Gastrocnemius medialis (tissue), 4 donors: ENCODE measurements at regions of chr17 and their contacts with region 1.

Region 1: DNA sequence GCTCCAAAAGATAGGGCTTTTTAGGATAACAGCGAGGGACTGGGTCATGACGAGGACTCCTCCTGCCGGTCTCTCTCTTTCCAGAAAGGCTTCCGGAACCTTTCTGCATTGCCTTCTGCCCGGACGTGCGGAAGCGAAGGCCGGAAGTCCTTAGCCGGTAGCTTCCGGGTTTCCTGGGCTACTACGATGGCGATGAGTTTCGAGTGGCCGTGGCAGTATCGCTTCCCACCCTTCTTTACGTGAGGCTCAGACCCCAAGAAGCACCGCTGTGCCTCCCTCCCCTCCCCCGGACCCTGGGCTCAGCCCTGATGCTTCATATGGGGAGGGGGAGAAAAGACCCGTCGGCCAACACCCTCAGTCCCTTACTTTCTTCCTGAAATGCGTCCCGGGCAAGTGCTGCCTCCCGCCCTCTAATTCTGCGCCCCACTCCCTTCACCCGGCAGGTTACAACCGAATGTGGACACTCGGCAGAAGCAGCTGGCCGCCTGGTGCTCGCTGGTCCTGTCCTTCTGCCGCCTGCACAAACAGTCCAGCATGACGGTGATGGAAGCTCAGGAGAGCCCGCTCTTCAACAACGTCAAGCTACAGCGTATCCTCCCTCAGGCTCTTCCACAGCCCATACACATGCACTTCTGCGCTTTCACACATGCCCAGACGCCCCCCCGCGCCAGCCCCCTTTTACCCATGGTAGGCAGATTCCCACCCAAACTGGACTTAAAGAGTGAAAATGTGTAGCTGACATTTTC is at the start of gene VPS25:
- DNase-seq: peak; percentile 62 to 74
- ATAC-seq: peak; percentile 96 to 99
- H3K4me3 ChIP-seq: peak within 1 kb of the TSS; percentile 85 to 100 (median 91)
- H3K27ac ChIP-seq: peak within 1 kb of the TSS; percentile 81 to 94 (median 88)
- H3K4me1 ChIP-seq: peaks cover 12 to 17% of the 10 kb centered on the region in 2 donors
- H3K27me3 ChIP-seq: no peaks in the 10 kb centered on the region
- CTCF ChIP-seq: peak in 1 of 5 experiments; percentile 24
- POLR2A ChIP-seq: peak in 1 of 2 donors; percentile 47
- total RNA-seq, gene VPS25: 44.8 to 54.6 (median 53.5) TPM

Region 2: GRCh38 chr17:42798383-42799380 is 25.2 kb after region 1 on chr17 and contains the starts of genes CNTD1 and COA3:
- in situ Hi-C with region 1: no loop called
- intact Hi-C with region 1: loop called (anchors 1 kb)
- DNase-seq: peak; percentile 77 to 84
- ATAC-seq: peak; percentile 97
- H3K4me3 ChIP-seq: peak within 1 kb of the TSS; percentile 78 to 94 (median 87)
- H3K27ac ChIP-seq: peak within 1 kb of the TSS; percentile 85 to 95 (median 86)
- H3K4me1 ChIP-seq: peaks cover 17 to 18% of the 10 kb centered on the region in 2 donors
- H3K27me3 ChIP-seq: no peaks in the 10 kb centered on the region
- CTCF ChIP-seq: peak in 1 of 5 experiments; percentile 19
- POLR2A ChIP-seq: no peak
- total RNA-seq, gene CNTD1: not detected
- total RNA-seq, gene COA3: 76.2 to 104 (median 86.8) TPM

Region 3: GRCh38 chr17:42819944-42820535 is 46.6 kb after region 1 on chr17:
- in situ Hi-C with region 1: no loop called
- intact Hi-C with region 1: loop called (anchors 1 kb)
- DNase-seq: peak in 1 of 2 donors; percentile 33
- ATAC-seq: no peak
- H3K4me3 ChIP-seq: no peak overlapping the region
- H3K27ac ChIP-seq: no peak overlapping the region
- H3K4me1 ChIP-seq: peaks cover 13 to 14% of the 10 kb centered on the region in 2 donors
- H3K27me3 ChIP-seq: no peaks in the 10 kb centered on the region
- CTCF ChIP-seq: peak in 3 of 5 experiments; percentile 41 to 61 (median 42)
- POLR2A ChIP-seq: no peak